ENCODE measurements at regions of chr3 and their contacts with region 1.

Region 1: GRCh38 chr3:142279965-142280590 is 54.7 kb upstream of the GK5 start:
- DNase-seq: peak; percentile 36
- H3K4me3 Mint-ChIP-seq: no peak overlapping the region
- H3K27ac Mint-ChIP-seq: no peak overlapping the region
- H3K4me1 Mint-ChIP-seq: peaks cover 24% of the 10 kb centered on the region
- H3K27me3 Mint-ChIP-seq: no peaks in the 10 kb centered on the region

Region 2: DNA sequence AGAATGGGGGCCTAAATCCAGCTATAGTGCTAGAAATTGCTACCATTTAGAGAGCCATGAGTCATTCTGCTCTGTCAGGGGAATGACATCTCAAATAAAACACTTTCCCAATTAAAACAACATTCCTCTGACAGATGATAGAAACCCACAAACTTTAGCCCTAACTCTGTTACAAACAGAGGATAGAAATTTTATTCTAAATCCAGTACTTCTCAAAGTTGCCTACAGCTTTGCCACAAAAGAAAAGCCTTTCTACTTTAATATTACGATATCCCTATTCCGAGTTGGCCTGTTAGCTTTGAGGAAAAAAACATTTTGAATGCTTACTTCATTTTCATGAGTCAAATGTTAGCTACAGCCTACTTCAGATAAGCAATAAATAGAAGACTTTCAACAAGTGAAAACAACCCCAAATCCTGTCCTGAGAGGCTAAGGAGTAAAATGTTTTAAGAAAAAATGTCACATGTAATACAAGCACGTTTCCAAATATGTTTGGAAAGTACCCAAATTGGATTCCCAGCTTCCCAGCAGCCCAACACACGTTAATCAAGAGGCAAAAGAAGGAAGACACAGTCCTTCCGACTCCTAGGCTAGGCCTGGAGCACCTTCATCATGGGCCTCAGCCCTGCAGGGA is 320.0 kb before region 1 on chr3:
- intact Hi-C with region 1: loop called (anchors 1 kb)
- DNase-seq: no peak
- H3K4me3 Mint-ChIP-seq: no peak overlapping the region
- H3K27ac Mint-ChIP-seq: no peak overlapping the region
- H3K4me1 Mint-ChIP-seq: no peaks in the 10 kb centered on the region
- H3K27me3 Mint-ChIP-seq: no peaks in the 10 kb centered on the region

Region 3: DNA sequence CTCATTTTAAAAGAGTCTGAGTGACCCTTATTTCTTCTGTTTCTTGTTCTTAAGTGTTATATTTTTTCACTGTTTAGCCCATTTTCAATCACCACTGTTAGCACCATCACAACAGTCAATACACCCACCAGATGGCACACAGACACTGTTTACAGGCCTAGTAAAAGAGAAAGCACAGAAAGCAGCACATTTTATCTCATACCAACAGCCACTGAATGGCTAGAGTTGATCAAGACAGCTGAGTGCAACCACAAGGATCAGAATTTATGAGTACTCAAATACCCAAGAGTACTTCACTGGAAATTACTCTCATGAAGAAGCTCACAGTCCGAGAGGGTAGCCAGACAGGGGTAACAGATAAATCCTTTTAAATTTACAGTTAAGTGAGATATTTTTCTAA is 257.7 kb before region 1 on chr3:
- intact Hi-C with region 1: loop called (anchors 1 kb)
- DNase-seq: no peak
- H3K4me3 Mint-ChIP-seq: no peak overlapping the region
- H3K27ac Mint-ChIP-seq: no peak overlapping the region
- H3K4me1 Mint-ChIP-seq: peaks cover 37% of the 10 kb centered on the region
- H3K27me3 Mint-ChIP-seq: no peaks in the 10 kb centered on the region

Region 4: DNA sequence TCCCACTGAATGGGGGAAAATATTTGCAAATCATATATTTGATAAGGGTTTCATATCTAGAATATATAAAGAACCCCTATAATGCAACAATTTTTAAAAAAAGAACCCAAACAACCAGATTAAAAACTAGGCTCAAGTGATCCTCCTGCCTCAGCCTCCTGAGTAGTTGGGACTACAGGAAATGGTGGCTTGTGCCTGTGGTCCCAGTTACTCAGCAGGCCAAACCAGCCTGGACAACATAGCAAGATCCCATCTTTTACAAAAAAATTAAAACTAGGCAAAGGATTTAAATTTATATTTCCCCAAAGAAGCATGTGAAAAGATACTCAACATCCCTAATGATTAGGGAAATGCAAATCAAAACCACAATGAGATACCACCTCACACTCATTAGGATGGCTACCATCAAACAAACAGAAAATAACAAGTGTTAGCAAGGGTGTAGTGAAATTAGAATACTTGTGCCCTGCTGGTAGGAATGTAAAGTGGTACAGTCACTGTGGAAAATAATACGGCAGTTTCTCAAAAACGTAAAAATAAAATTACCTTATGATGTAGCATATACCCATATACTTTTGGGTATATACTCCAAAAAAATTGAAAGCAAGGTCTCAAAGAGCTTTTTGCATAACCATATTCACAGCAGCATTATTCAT is 150.4 kb before region 1 on chr3:
- intact Hi-C with region 1: loop called (anchors 1 kb)
- DNase-seq: no peak
- H3K4me3 Mint-ChIP-seq: no peak overlapping the region
- H3K27ac Mint-ChIP-seq: no peak overlapping the region
- H3K4me1 Mint-ChIP-seq: no peaks in the 10 kb centered on the region
- H3K27me3 Mint-ChIP-seq: no peaks in the 10 kb centered on the region

Region 5: GRCh38 chr3:142180761-142181362 is 99.2 kb before region 1 on chr3:
- intact Hi-C with region 1: loop called (anchors 1 kb)
- DNase-seq: no peak
- H3K4me3 Mint-ChIP-seq: no peak overlapping the region
- H3K27ac Mint-ChIP-seq: no peak overlapping the region
- H3K4me1 Mint-ChIP-seq: no peaks in the 10 kb centered on the region
- H3K27me3 Mint-ChIP-seq: no peaks in the 10 kb centered on the region

Region 6: DNA sequence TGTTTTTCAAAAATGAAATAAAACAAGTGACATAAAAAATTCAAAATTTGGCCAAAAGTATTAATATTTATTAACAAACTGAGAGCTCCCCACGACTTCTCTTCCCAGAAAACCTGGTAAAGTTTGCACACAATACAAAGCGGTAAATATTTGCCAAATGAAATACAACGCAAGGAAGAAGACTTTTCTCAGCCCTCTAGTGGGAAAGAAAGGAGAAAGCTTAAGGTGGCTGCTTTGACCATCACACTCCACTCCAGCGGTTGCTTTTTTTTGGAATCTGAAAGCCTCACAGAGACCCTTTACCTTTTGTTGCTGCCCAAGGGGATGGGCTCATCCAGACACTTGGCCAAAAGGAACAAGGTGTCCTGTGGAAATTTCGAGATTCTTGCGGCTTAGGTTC is 53.6 kb before region 1 on chr3:
- intact Hi-C with region 1: loop called (anchors 2 kb)
- DNase-seq: no peak
- H3K4me3 Mint-ChIP-seq: peak overlapping the region; percentile 72
- H3K27ac Mint-ChIP-seq: no peak overlapping the region
- H3K4me1 Mint-ChIP-seq: peaks cover 20% of the 10 kb centered on the region
- H3K27me3 Mint-ChIP-seq: no peaks in the 10 kb centered on the region

Measured in activated T-helper 1 cell treated with anti-CD3 and anti-CD28 coated beads, Interleukin-12 subunit alpha, Interleukin-12 subunit beta, Interleukin-2, Interleukin-4 antibody, amounts not matched to agents 30 ng/mL and 10 ng/mL and 1 ng/mL, durations not matched to agents 14 hours and 24 hours and 36 hours (primary cell).